ENCODE measurements at regions of chr6 and their contacts with region 1.

Region 1: GRCh38 chr6:20319520-20320357 is 81.9 kb upstream of the E2F3 start:
- DNase-seq: peak; percentile 38 to 89 (median 79)
- ATAC-seq: peak; percentile 90
- H3K4me3 ChIP-seq: peak overlapping the region; percentile 68
- H3K4me3 Mint-ChIP-seq: peak overlapping the region; percentile 77 to 95 (median 90)
- H3K27ac ChIP-seq: peak overlapping the region; percentile 71
- H3K27ac Mint-ChIP-seq: peak overlapping the region; percentile 89 to 99 (median 95)
- H3K4me1 ChIP-seq: peaks cover 5 to 6% of the 10 kb centered on the region in 2 donors
- H3K4me1 Mint-ChIP-seq: peaks cover 5 to 27% (median 18%) of the 10 kb centered on the region in 7 donors
- H3K27me3 ChIP-seq: no peaks in the 10 kb centered on the region
- H3K27me3 Mint-ChIP-seq: peaks cover 0 to 18% (median 0%) of the 10 kb centered on the region in 5 donors

Region 2: DNA sequence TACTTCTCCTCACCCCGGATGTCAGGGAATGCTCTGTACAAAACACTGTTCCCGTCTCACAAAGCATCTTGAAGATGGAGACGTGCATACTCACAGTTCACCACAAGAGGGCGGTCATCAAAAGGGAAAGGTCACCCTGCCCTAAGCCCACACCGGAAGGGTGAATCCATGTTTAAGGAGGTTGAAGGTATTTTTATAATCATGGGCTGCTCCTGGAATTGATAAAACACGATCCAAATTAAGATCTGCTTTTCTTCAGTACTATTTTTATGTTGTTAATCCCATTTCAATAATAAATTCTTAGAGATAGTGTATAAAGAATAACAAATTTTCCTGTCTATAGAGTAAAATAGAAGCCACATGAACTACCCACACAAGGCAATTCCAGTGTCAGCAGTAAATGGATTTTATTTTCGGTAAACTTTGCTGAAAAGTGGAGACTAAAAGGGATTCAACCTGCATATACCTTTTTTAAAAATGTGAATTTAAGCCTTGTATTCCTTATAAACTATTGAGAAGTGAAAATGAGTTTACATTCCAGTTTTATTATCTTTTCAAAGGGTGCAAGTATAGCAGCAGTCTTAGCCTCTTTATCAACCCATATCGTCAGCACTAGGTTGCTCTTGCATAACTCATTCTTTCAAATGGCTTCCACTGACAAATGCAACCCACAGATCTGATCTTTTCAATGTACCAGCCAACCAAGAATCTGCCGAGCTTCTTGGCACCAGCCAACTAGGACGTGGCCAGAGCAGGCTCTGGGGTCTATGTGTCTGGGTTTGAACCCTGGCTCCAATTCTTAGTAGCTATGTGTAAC is 27.8 kb before region 1 on chr6:
- CTCF ChIA-PET with region 1: interaction called, 3 read pairs
- POLR2A ChIA-PET with region 1: interaction called, 9 read pairs
- intact Hi-C with region 1: loop called in 1 of 2 experiments (anchors 1 kb)
- DNase-seq: peak; percentile 36 to 72 (median 62)
- ATAC-seq: peak; percentile 94
- H3K4me3 ChIP-seq: no peak overlapping the region
- H3K4me3 Mint-ChIP-seq: peak overlapping the region in 5 of 10 donors; percentile 1 to 54 (median 44)
- H3K27ac ChIP-seq: no peak overlapping the region
- H3K27ac Mint-ChIP-seq: peak overlapping the region in 4 of 9 donors; percentile 3 to 44 (median 22)
- H3K4me1 ChIP-seq: peaks cover 8 to 15% of the 10 kb centered on the region in 2 donors
- H3K4me1 Mint-ChIP-seq: peaks cover 6 to 34% (median 25%) of the 10 kb centered on the region in 7 donors
- H3K27me3 ChIP-seq: no peaks in the 10 kb centered on the region
- H3K27me3 Mint-ChIP-seq: peaks cover 0 to 6% (median 0%) of the 10 kb centered on the region in 5 donors

Region 3: GRCh38 chr6:20340068-20340848 is 20.5 kb after region 1 on chr6:
- CTCF ChIA-PET with region 1: interaction called, 7 read pairs
- POLR2A ChIA-PET with region 1: interaction called, 50 read pairs
- intact Hi-C with region 1: loop called (anchors 1 to 2 kb)
- DNase-seq: no peak
- ATAC-seq: no peak
- H3K4me3 ChIP-seq: no peak overlapping the region
- H3K4me3 Mint-ChIP-seq: no peak overlapping the region
- H3K27ac ChIP-seq: no peak overlapping the region
- H3K27ac Mint-ChIP-seq: peak overlapping the region in 1 of 9 donors; percentile 70
- H3K4me1 ChIP-seq: peaks cover 5 to 8% of the 10 kb centered on the region in 2 donors
- H3K4me1 Mint-ChIP-seq: peaks cover 13 to 46% (median 30%) of the 10 kb centered on the region in 7 donors
- H3K27me3 ChIP-seq: no peaks in the 10 kb centered on the region
- H3K27me3 Mint-ChIP-seq: no peaks in the 10 kb centered on the region

Region 4: GRCh38 chr6:20366091-20366832 is 46.5 kb after region 1 on chr6:
- CTCF ChIA-PET with region 1: interaction called, 26 read pairs
- POLR2A ChIA-PET with region 1: interaction called, 202 read pairs
- intact Hi-C with region 1: loop called (anchors 1 kb)
- DNase-seq: peak in 8 of 9 donors; percentile 25 to 79 (median 66)
- ATAC-seq: peak; percentile 82
- H3K4me3 ChIP-seq: peak overlapping the region; percentile 15
- H3K4me3 Mint-ChIP-seq: peak overlapping the region; percentile 79 to 92 (median 84)
- H3K27ac ChIP-seq: peak overlapping the region; percentile 65
- H3K27ac Mint-ChIP-seq: peak overlapping the region; percentile 91 to 99 (median 97)
- H3K4me1 ChIP-seq: peaks cover 55 to 56% of the 10 kb centered on the region in 2 donors
- H3K4me1 Mint-ChIP-seq: peaks cover 48 to 73% (median 65%) of the 10 kb centered on the region in 7 donors
- H3K27me3 ChIP-seq: no peaks in the 10 kb centered on the region
- H3K27me3 Mint-ChIP-seq: no peaks in the 10 kb centered on the region

Region 5: GRCh38 chr6:20534295-20535262 is 214.8 kb after region 1 on chr6 and contains the start of gene CDKAL1:
- CTCF ChIA-PET with region 1: interaction called, 5 read pairs
- POLR2A ChIA-PET with region 1: interaction called, 5 read pairs
- intact Hi-C with region 1: loop called in 1 of 2 experiments (anchors 1 kb)
- DNase-seq: peak; percentile 69 to 89 (median 86)
- ATAC-seq: peak; percentile 95
- H3K4me3 ChIP-seq: peak within 1 kb of the TSS; percentile 92
- H3K4me3 Mint-ChIP-seq: peak within 1 kb of the TSS; percentile 88 to 100 (median 97)
- H3K27ac ChIP-seq: peak within 1 kb of the TSS; percentile 89
- H3K27ac Mint-ChIP-seq: peak within 1 kb of the TSS; percentile 94 to 100 (median 99)
- H3K4me1 ChIP-seq: peaks cover 0 to 11% of the 10 kb centered on the region in 2 donors
- H3K4me1 Mint-ChIP-seq: peaks cover 22 to 53% (median 41%) of the 10 kb centered on the region in 7 donors
- H3K27me3 ChIP-seq: no peaks in the 10 kb centered on the region
- H3K27me3 Mint-ChIP-seq: peaks cover 0 to 4% (median 0%) of the 10 kb centered on the region in 5 donors
- total RNA-seq, gene CDKAL1: 23.6 to 30.3 (median 25.0) TPM

Measured in naive thymus-derived CD4-positive, alpha-beta T cell (primary cell).